ENCODE measurements at regions of chr11 and their contacts with region 1.

Region 1: GRCh38 chr11:11028017-11028692 is 170.3 kb upstream of the ZBED5 start:
- DNase-seq: peak; percentile 34
- ATAC-seq: peak; percentile 94
- H3K4me3 ChIP-seq: no peak overlapping the region
- H3K27ac ChIP-seq: no peak overlapping the region
- H3K4me1 ChIP-seq: no peaks in the 10 kb centered on the region
- H3K27me3 ChIP-seq: 0 out of 5 replicates have a peak, but pooled peaks cover 0 to 3% of the 10 kb centered on the region in 2 experiments
- CTCF ChIP-seq: peak; percentile 79
- EP300 ChIP-seq: no peak
- POLR2A ChIP-seq: no peak
- RAD21 ChIP-seq: 0 out of 2 replicates have a peak, but pooled peaks have one; percentile 16

Region 2: GRCh38 chr11:10725114-10725906 is 302.8 kb before region 1 on chr11:
- CTCF ChIA-PET with region 1: no interaction called
- POLR2A ChIA-PET with region 1: no interaction called
- in situ Hi-C with region 1: no loop called
- intact Hi-C with region 1: no loop called
- DNase-seq: no peak
- ATAC-seq: no peak
- H3K4me3 ChIP-seq: no peak overlapping the region
- H3K27ac ChIP-seq: no peak overlapping the region
- H3K4me1 ChIP-seq: no peaks in the 10 kb centered on the region
- H3K27me3 ChIP-seq: peaks cover 9 to 33% of the 10 kb centered on the region in 2 experiments; a peak in 4 of 5 replicates
- CTCF ChIP-seq: no peak
- EP300 ChIP-seq: no peak
- POLR2A ChIP-seq: no peak
- RAD21 ChIP-seq: no peak

Region 3: GRCh38 chr11:11157185-11157584 is 129.0 kb after region 1 on chr11:
- CTCF ChIA-PET with region 1: no interaction called
- POLR2A ChIA-PET with region 1: no interaction called
- in situ Hi-C with region 1: no loop called
- intact Hi-C with region 1: loop called (anchors 2 kb)
- DNase-seq: peak; percentile 33
- ATAC-seq: peak; percentile 91
- H3K4me3 ChIP-seq: no peak overlapping the region
- H3K27ac ChIP-seq: no peak overlapping the region
- H3K4me1 ChIP-seq: no peaks in the 10 kb centered on the region
- H3K27me3 ChIP-seq: no peaks in the 10 kb centered on the region; a peak in 1 of 5 replicates
- CTCF ChIP-seq: peak; percentile 55
- EP300 ChIP-seq: no peak
- POLR2A ChIP-seq: no peak
- RAD21 ChIP-seq: 0 out of 2 replicates have a peak, but pooled peaks have one; percentile 12

Region 4: DNA sequence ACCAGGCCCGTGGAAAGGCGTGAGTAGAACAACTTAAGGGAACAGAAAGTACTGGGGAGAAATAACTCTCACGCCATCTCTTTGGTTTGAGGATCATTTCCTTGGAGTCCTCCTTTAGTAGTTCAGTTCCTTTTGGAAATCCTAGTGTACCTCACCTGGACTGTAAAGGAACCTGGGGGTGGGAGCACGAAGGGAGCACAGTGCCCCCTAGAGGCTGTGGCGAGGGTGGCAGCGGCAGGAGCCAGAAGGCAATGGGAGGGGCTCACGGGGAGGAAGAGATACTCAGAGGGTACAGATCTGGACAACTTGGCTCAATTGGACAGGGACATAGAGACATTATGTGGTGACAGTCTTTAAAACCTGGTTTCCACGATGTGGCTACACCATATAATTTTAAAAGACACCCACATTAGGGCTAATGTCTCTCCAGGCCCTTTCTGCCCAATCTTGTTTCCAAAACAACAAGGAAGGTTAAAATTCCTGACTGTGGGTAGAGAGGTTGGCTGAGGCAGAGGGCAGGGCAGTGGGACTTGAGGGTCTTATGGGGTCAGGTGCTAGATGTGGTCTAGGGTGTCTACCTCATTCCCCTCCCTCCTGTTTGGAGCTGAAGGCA is 237.9 kb after region 1 on chr11:
- CTCF ChIA-PET with region 1: no interaction called
- POLR2A ChIA-PET with region 1: no interaction called
- in situ Hi-C with region 1: loop called (anchors 10 kb)
- intact Hi-C with region 1: no loop called
- DNase-seq: no peak
- ATAC-seq: peak; percentile 88
- H3K4me3 ChIP-seq: no peak overlapping the region
- H3K27ac ChIP-seq: no peak overlapping the region
- H3K4me1 ChIP-seq: no peaks in the 10 kb centered on the region
- H3K27me3 ChIP-seq: no peaks in the 10 kb centered on the region; a peak in 1 of 5 replicates
- CTCF ChIP-seq: peak; percentile 82
- EP300 ChIP-seq: no peak
- POLR2A ChIP-seq: no peak
- RAD21 ChIP-seq: peak; percentile 21; the same call in 1 of the 2 replicates

Measured in HepG2 (cell line).